Transverse colon (tissue), 4 donors: ENCODE measurements at regions of chr14 and their contacts with region 1.

Region 1: DNA sequence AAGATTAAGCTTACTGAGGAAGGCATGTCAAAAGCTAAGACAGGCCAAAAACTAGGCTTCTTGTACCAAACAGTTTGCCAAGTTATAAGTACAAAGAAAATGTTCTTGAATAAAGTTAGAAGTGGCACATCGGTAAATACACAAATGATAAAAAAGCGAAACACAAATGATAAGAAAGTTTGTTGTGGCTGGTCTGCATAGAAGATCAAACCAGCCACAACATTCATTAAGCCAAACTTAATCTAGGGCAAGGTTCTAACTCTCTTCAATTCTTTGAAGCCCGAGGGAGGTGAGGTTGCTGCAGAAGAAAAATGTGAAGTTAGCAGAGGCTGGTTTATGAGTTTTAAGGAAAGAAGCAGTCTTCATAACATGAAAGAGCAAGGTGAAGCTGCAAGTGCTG is 1119.6 kb upstream of the FLRT2 start:
- DNase-seq: no peak
- H3K4me3 ChIP-seq: no peak overlapping the region
- H3K27ac ChIP-seq: no peak overlapping the region
- H3K4me1 ChIP-seq: no peaks in the 10 kb centered on the region
- H3K27me3 ChIP-seq: no peaks in the 10 kb centered on the region
- CTCF ChIP-seq: no peak
- EP300 ChIP-seq: no peak
- POLR2A ChIP-seq: no peak

Region 2: GRCh38 chr14:85878874-85879273 is 1468.5 kb after region 1 on chr14:
- in situ Hi-C with region 1: no loop called
- intact Hi-C with region 1: loop called (anchors 5 kb)
- DNase-seq: no peak
- H3K4me3 ChIP-seq: no peak overlapping the region
- H3K27ac ChIP-seq: no peak overlapping the region
- H3K4me1 ChIP-seq: no peaks in the 10 kb centered on the region
- H3K27me3 ChIP-seq: no peaks in the 10 kb centered on the region
- CTCF ChIP-seq: no peak
- EP300 ChIP-seq: no peak
- POLR2A ChIP-seq: no peak